Left ventricle myocardium superior (tissue), 1 donor: ENCODE measurements at regions of chr2 and their contacts with region 1.

Region 1: DNA sequence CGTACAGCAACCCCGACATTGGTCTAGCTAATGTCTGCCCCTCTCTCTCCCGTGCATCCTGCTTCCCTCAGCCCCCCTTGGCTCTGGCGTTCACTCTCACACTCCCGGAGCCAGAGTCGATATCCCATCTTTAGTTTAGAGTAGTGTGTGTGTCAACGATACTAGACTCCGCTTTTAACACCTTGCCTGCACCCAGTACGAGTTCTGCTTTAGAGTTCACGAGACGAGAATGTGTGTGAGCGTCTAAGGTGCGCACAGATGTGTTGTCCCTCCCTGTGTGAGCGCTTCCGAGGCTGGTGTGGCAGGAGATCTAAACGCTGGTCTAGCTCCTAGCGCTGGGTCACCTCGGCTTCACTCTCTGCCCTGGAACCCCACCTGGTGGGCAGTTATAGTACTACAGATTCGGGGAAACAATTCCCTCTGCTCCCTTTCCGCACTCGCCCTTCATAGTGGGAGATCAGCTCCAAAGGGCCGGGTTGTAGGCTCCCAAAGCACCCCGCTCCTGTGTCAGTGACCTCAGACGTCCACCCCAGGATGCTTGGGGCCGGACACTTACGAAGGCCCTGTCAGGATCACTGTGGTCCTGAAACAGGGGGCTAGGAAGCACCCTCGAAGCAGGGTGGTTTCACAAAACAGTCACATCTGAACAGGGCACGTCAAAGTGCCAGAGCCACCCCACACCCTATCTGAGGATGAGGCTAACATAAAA is 2.6 kb upstream of the CYP26B1 start:
- DNase-seq: peak; percentile 68
- ATAC-seq: peak; percentile 85

Region 2: GRCh38 chr2:71545572-71546274 is 604.6 kb before region 1 on chr2:
- intact Hi-C with region 1: loop called (anchors 10 kb)
- DNase-seq: peak; percentile 52
- ATAC-seq: peak; percentile 76

Region 3: DNA sequence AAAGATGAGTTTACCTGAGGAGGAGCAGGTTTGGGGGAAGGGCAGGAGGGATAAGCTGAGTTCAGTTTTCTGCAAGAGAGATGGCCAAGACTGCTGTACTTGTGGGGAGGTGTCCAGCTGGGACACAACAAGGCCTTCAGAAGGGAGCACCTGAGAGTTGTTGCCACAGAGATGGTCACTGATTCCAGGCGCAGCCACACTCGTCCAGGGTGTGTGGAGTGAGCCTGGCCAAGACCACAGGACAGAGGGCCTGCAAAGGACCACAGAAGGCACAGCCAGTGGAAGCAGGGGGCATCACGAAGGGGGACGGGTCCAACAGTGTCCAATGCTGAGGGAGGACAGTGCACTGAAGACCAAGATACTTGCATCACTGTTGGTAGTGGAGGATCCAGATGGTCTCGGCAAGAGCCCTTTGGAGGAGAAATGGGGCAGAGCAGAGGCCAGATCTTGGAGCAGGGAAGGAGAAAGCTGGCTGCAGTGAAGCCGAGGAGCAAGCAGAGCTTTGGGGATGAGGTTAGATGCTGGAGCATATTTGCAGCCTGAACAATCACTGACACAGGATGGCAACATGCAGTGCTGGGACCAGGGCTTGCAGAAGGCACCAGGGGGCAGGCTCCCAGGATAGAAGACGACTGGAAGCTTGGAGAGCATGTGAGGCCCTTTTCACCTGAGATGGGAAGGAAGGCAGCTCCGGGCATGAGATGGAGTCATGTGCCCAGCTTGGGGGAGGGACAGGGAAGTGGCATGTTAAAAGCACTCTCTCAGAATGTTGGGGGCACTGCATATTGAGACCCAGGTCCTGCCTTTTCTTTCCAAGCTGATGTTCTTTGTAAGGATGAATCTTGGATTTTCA is 216.6 kb before region 1 on chr2:
- intact Hi-C with region 1: loop called (anchors 5 kb)
- DNase-seq: no peak
- ATAC-seq: peak; percentile 2

Region 4: DNA sequence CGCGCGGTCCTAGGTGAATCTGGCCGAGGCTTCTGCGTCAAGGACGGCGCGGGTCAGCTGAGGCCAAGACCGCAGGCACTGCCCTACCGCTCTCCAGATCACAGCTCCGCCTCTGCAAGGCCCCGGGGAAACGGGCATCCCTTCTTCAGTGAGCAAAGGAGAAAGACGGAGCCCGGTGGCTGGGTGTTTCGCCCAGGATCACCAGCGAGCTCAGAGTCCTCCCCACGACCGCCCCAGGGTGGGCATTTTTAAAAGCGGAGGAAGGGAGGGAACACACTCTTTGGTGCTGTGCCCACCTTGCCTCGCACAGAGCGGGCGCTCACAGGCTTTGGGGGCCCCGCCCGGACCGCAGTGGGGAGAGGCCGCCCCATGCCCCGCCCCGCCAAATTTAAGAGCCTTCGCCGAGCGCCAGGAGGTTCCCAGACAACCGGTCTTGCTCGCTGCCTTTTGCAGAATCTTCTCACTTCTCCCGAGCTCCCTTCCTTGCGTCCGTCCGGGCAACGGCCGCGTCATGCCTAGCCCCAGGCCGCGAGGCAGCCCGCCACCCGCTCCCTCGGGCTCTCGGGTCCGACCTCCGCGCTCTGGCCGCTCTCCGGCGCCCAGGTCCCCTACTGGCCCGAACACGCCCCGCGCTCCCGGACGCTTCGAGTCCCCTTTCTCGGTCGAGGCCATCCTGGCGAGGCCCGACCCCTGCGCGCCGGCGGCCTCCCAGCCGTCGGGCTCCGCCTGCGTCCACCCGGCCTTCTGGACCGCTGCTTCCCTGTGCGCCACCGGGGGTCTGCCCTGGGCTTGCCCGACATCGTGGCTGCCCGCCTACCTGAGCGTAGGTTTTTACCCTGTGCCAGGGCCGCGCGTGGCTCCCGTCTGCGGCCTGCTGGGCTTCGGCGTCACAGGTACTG is 1052.1 kb after region 1 on chr2 and contains the start of gene NOTO:
- intact Hi-C with region 1: no loop called
- DNase-seq: no peak
- ATAC-seq: peak; percentile 57
- total RNA-seq, gene NOTO: not detected